ENCODE measurements at regions of chr9 and their contacts with region 1.

Region 1: DNA sequence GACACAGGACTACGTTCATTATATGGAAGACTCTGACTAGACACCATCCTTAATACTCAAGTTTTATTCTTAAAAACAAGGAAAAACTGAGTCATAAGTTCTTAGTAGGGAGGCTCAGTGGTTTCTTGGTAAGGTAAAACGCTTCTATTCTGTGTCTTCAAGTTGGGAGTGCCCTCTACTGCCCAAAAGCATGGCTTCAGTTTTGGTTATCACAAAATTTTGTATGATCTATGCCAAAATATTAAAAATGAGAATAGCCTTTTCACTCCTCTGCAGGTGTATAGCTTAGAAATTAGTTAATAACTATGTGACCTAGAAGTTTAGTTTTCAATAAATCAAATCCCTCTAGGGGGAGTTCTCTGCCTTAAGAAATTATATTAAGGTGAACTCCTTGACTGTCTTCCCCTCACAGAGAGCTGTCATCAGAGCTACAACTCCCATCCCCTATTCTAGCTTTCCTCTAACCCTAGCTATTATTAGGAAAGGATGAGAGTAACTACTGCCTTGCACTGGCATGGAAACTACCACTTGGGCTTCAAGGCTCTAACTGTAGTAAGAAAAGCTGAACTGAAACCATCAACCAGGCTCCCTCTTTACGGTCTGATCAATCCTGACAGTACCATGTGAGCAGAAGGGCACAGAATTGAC is 189.7 kb downstream of the GNAQ start:
- DNase-seq: no peak
- H3K4me3 ChIP-seq: no peak overlapping the region
- H3K27ac ChIP-seq: no peak overlapping the region
- H3K4me1 ChIP-seq: peaks cover 13 to 52% (median 15%) of the 10 kb centered on the region in 4 donors
- H3K27me3 ChIP-seq: no peaks in the 10 kb centered on the region
- CTCF ChIP-seq: no peak
- EP300 ChIP-seq: no peak
- POLR2A ChIP-seq: no peak

Region 2: GRCh38 chr9:78035383-78035993 is 193.6 kb after region 1 on chr9:
- in situ Hi-C with region 1: no loop called
- intact Hi-C with region 1: loop called (anchors 10 kb)
- DNase-seq: peak; percentile 58
- H3K4me3 ChIP-seq: no peak overlapping the region
- H3K27ac ChIP-seq: peak overlapping the region; percentile 57 to 97 (median 79)
- H3K4me1 ChIP-seq: peaks cover 6 to 42% (median 21%) of the 10 kb centered on the region in 4 donors
- H3K27me3 ChIP-seq: no peaks in the 10 kb centered on the region
- CTCF ChIP-seq: peak; percentile 82 to 91 (median 85)
- EP300 ChIP-seq: no peak
- POLR2A ChIP-seq: no peak

Region 3: GRCh38 chr9:78130004-78130403 is 288.1 kb after region 1 on chr9:
- in situ Hi-C with region 1: no loop called
- intact Hi-C with region 1: no loop called
- DNase-seq: no peak
- H3K4me3 ChIP-seq: no peak overlapping the region
- H3K27ac ChIP-seq: no peak overlapping the region
- H3K4me1 ChIP-seq: peaks cover 0 to 9% (median 0%) of the 10 kb centered on the region in 4 donors
- H3K27me3 ChIP-seq: peaks cover 7% of the 10 kb centered on the region
- CTCF ChIP-seq: no peak
- EP300 ChIP-seq: no peak
- POLR2A ChIP-seq: no peak